Activated CD4-positive, alpha-beta memory T cell treated with anti-CD3 and anti-CD28 coated beads for 36 hours (primary cell): ENCODE measurements at regions of chr17 and their contacts with region 1.

Region 1: GRCh38 chr17:78865682-78866390 is 25.2 kb upstream of the USP36 start:
- DNase-seq: peak; percentile 78
- H3K4me3 Mint-ChIP-seq: no peak overlapping the region
- H3K27ac Mint-ChIP-seq: no peak overlapping the region
- H3K4me1 Mint-ChIP-seq: peaks cover 3% of the 10 kb centered on the region
- H3K27me3 Mint-ChIP-seq: peaks cover 7% of the 10 kb centered on the region

Region 2: DNA sequence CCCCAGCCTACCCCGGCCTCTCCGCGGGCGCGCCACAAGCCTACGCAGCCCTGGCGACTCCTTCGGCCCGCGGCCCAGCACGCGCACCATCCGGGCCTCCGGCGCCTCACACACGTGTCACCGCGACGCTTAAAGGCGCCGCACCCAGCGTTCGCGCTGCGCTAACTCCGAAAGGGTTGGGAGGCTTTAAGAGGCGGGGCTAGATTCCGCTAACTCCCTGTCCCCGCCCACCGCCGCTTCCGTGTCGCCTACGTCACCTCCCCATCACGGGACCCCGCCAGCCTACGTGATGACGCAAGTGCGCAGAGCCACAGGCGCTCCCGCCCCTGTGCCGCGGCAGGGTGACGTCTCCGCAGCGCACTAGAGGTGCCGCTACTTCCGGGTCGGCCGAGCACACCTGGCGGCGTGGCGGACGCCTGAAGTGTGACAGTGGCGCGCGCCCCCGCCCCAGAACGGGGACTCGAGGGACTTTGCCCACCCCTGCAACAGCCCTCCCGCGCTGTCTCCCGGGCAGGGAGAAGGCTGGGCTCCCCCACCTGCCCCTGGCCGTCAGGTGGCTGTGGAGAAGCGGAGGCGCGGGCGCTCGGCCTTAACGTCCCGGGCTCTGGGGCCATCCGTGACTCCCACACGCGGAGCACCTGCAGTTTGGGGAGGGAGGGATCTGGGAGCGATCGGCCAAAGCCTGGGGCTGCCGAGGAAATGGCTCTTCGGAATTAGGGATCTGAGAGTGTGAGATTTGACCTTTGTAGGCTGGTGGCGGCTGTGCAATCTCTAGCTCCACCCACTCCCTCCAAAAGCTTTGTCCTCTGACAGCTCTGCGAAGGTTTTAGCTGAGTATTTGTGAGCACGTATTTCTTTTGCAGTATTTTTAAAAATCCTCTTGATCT is 24.9 kb before region 1 on chr17 and contains the start of gene USP36:
- CTCF ChIA-PET with region 1: interaction called, 13 read pairs
- POLR2A ChIA-PET with region 1: no interaction called
- intact Hi-C with region 1: no loop called
- DNase-seq: peak; percentile 100
- H3K4me3 Mint-ChIP-seq: peak within 1 kb of the TSS; percentile 84
- H3K27ac Mint-ChIP-seq: peak within 1 kb of the TSS; percentile 89
- H3K4me1 Mint-ChIP-seq: peaks cover 46% of the 10 kb centered on the region
- H3K27me3 Mint-ChIP-seq: no peaks in the 10 kb centered on the region
- total RNA-seq, gene USP36: 71.2 to 74.3 TPM

Region 3: GRCh38 chr17:78879635-78880186 is 13.9 kb after region 1 on chr17:
- CTCF ChIA-PET with region 1: interaction called, 28 read pairs
- POLR2A ChIA-PET with region 1: no interaction called
- intact Hi-C with region 1: no loop called
- DNase-seq: peak; percentile 46
- H3K4me3 Mint-ChIP-seq: peak overlapping the region; percentile 23
- H3K27ac Mint-ChIP-seq: no peak overlapping the region
- H3K4me1 Mint-ChIP-seq: peaks cover 15% of the 10 kb centered on the region
- H3K27me3 Mint-ChIP-seq: peaks cover 10% of the 10 kb centered on the region

Region 4: GRCh38 chr17:78903101-78903779 is 37.4 kb after region 1 on chr17 and contains the start of gene CEP295NL:
- CTCF ChIA-PET with region 1: interaction called, 15 read pairs
- POLR2A ChIA-PET with region 1: no interaction called
- intact Hi-C with region 1: no loop called
- DNase-seq: peak; percentile 66
- H3K4me3 Mint-ChIP-seq: no peak within 1 kb of the TSS
- H3K27ac Mint-ChIP-seq: peak within 1 kb of the TSS; percentile 48
- H3K4me1 Mint-ChIP-seq: peaks cover 12% of the 10 kb centered on the region
- H3K27me3 Mint-ChIP-seq: no peaks in the 10 kb centered on the region
- total RNA-seq, gene CEP295NL: not detected

Region 5: GRCh38 chr17:78965491-78965948 is 99.7 kb after region 1 on chr17:
- CTCF ChIA-PET with region 1: interaction called, 89 read pairs
- POLR2A ChIA-PET with region 1: no interaction called
- intact Hi-C with region 1: no loop called
- DNase-seq: no peak
- H3K4me3 Mint-ChIP-seq: no peak overlapping the region
- H3K27ac Mint-ChIP-seq: no peak overlapping the region
- H3K4me1 Mint-ChIP-seq: no peaks in the 10 kb centered on the region
- H3K27me3 Mint-ChIP-seq: no peaks in the 10 kb centered on the region

Region 6: DNA sequence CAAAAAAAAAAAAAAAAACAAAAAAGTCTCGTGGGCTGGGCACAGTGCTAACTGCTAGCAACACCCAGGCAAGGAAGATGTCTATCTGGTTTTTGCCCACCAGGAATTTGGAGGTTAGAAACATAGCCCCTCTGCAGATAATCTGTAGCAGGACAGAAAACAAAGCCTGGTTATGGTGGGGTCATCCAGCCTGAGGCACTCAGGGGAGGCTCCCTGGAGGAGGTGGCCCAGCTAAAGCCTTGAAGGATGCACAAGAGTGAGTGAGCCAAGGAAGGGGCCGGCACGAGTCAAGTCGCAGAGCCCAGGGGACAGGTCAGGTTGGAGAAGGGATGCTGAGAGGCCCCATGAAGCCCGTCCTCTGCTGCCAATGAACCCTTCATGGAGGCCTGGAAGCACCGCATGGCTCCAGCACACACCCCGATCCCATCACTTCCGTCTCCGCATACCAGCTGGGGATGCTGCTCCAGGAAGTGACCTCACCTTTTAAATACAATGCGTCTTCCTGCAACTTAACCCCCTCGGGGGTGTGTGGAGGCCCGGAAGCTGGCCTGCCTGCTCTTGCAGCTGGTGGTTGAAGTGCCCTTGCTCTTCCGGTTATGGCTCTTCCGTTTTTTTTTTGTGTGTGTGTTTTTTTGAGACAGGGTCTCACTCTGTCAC is 295.3 kb after region 1 on chr17:
- CTCF ChIA-PET with region 1: no interaction called
- POLR2A ChIA-PET with region 1: no interaction called
- intact Hi-C with region 1: no loop called
- DNase-seq: peak; percentile 48
- H3K4me3 Mint-ChIP-seq: no peak overlapping the region
- H3K27ac Mint-ChIP-seq: no peak overlapping the region
- H3K4me1 Mint-ChIP-seq: peaks cover 7% of the 10 kb centered on the region
- H3K27me3 Mint-ChIP-seq: no peaks in the 10 kb centered on the region